GM12878 (cell line): ENCODE measurements at regions of chr3 and their contacts with region 1.

Region 1: GRCh38 chr3:58188173-58188564 is 22.6 kb downstream of the DNASE1L3 start:
- DNase-seq: no peak
- ATAC-seq: peak; percentile 35
- H3K4me3 ChIP-seq: no peak overlapping the region
- H3K27ac ChIP-seq: no peak overlapping the region
- H3K4me1 ChIP-seq: peaks cover 3% of the 10 kb centered on the region; the same call in 1 of the 2 replicates
- H3K27me3 ChIP-seq: no peaks in the 10 kb centered on the region
- CTCF ChIP-seq: no peak
- EP300 ChIP-seq: no peak
- POLR2A ChIP-seq: no peak
- RAD21 ChIP-seq: no peak

Region 2: DNA sequence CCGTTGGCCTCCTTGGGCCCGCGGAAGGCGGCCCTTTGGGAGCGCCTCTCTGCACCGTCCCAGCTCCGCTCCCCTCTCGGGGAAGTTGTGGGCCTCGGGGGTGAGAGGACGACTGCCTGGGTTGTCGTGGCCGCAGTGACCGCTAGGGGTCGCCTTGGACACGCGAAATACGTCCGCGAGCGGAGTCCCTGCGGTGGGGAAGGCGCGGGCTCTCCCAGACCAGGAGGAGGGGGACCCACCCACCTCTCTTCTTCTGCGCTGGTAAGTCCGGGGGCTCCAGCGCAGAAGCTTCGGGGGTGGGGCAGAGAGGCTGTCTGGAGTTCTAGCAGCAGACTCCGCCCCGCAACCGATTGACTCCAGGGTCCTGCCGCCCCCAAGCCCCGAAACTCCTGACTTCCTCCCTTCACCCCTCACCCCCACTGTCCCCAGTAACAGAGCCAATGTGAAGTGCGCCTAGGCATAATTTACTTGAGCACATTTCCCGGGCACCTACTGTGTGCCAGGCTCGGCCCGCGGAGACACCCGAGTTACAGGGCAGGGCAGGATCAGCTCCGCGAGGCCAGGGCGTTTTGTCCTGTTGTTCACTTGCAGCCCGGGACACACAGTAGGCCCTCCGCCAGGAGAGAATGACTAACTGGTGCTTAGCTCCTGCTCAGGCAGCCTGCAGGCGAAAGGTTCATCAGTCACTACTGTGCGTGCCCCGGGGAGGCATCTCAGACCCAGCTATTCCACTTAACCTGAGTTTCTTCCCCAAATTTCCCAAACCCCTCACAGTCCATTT is 10.2 kb before region 1 on chr3:
- CTCF ChIA-PET with region 1: interaction called, 48 read pairs
- POLR2A ChIA-PET with region 1: no interaction called
- RAD21 ChIA-PET with region 1: interaction called, 36 read pairs
- SMC1A ChIA-PET with region 1: interaction called, 18 read pairs
- in situ Hi-C with region 1: no loop called
- intact Hi-C with region 1: no loop called
- DNase-seq: no peak
- ATAC-seq: peak; percentile 94
- H3K4me3 ChIP-seq: peak overlapping the region; percentile 33; the same call in 1 of the 2 replicates
- H3K27ac ChIP-seq: no peak overlapping the region
- H3K4me1 ChIP-seq: peaks cover 14% of the 10 kb centered on the region
- H3K27me3 ChIP-seq: no peaks in the 10 kb centered on the region
- CTCF ChIP-seq: peak; percentile 81 to 93 (median 88)
- EP300 ChIP-seq: no peak
- POLR2A ChIP-seq: no peak
- RAD21 ChIP-seq: peak; percentile 68

Region 3: GRCh38 chr3:58206406-58207011 is 18.3 kb after region 1 on chr3:
- CTCF ChIA-PET with region 1: interaction called, 655 read pairs
- POLR2A ChIA-PET with region 1: interaction called, 491 read pairs
- RAD21 ChIA-PET with region 1: interaction called, 14 read pairs
- SMC1A ChIA-PET with region 1: interaction called, 60 read pairs
- in situ Hi-C with region 1: no loop called
- intact Hi-C with region 1: no loop called
- DNase-seq: no peak
- ATAC-seq: peak; percentile 58
- H3K4me3 ChIP-seq: no peak overlapping the region
- H3K27ac ChIP-seq: peak overlapping the region; percentile 6; the same call in 1 of the 2 replicates
- H3K4me1 ChIP-seq: peaks cover 23% of the 10 kb centered on the region
- H3K27me3 ChIP-seq: no peaks in the 10 kb centered on the region
- CTCF ChIP-seq: no peak
- EP300 ChIP-seq: no peak
- POLR2A ChIP-seq: no peak
- RAD21 ChIP-seq: no peak

Region 4: GRCh38 chr3:58237238-58237940 is 49.2 kb after region 1 on chr3 and contains the start of gene ABHD6:
- CTCF ChIA-PET with region 1: interaction called, 61 read pairs
- POLR2A ChIA-PET with region 1: interaction called, 8 read pairs
- RAD21 ChIA-PET with region 1: interaction called, 47 read pairs
- SMC1A ChIA-PET with region 1: interaction called, 36 read pairs
- in situ Hi-C with region 1: no loop called
- intact Hi-C with region 1: no loop called
- DNase-seq: no peak
- ATAC-seq: peak; percentile 79
- H3K4me3 ChIP-seq: peak within 1 kb of the TSS; percentile 68
- H3K27ac ChIP-seq: peak within 1 kb of the TSS; percentile 44
- H3K4me1 ChIP-seq: peaks cover 13% of the 10 kb centered on the region
- H3K27me3 ChIP-seq: no peaks in the 10 kb centered on the region
- CTCF ChIP-seq: peak; percentile 33 to 58 (median 37); a peak in 5 of 6 replicates
- EP300 ChIP-seq: no peak
- POLR2A ChIP-seq: peak; percentile 48
- RAD21 ChIP-seq: peak; percentile 61
- polyA plus RNA-seq, gene ABHD6: 1.4 to 1.5 TPM

Region 5: DNA sequence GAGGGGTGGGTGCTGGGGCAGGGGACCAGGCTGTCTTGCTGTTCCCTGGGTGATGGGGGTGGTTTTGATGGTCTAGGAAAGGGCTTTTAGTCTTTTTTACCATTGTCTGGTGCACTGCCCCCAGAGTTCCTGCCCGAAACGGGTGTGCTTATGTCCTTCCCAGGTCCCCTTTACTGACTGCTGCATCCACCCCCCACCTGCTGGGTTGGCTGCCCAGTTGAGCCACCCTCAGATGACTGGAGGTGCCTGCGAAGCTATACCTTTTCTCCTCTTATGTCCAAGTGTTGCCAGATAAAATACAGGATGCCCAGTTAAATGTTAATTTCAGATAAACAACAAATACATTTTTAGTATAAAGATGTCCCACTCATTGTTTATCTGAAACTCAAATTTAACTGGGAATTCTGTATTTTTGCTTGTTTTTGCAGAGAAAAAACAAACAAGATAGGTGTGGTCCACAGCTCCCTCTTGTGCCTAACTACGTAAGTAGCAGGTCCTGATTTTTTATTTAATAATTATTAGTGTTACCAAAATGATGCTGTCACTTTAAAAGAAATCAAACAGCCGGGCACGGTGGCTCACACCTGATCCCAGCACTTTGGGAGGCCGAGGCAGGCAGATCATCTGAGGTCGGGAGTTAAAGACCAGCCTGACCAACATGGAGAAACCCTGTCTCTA is 111.8 kb after region 1 on chr3:
- CTCF ChIA-PET with region 1: interaction called, 503 read pairs
- POLR2A ChIA-PET with region 1: interaction called, 7 read pairs
- RAD21 ChIA-PET with region 1: interaction called, 106 read pairs
- SMC1A ChIA-PET with region 1: interaction called, 127 read pairs
- in situ Hi-C with region 1: loop called (anchors 5 kb)
- intact Hi-C with region 1: loop called (anchors 1 kb)
- DNase-seq: no peak
- ATAC-seq: peak; percentile 59
- H3K4me3 ChIP-seq: no peak overlapping the region
- H3K27ac ChIP-seq: no peak overlapping the region
- H3K4me1 ChIP-seq: no peaks in the 10 kb centered on the region
- H3K27me3 ChIP-seq: no peaks in the 10 kb centered on the region; a peak in 1 of 4 replicates
- CTCF ChIP-seq: peak; percentile 48 to 59 (median 51); a peak in 5 of 6 replicates
- EP300 ChIP-seq: no peak
- POLR2A ChIP-seq: no peak
- RAD21 ChIP-seq: peak; percentile 74

Region 6: GRCh38 chr3:58532794-58533220 is 344.6 kb after region 1 on chr3:
- CTCF ChIA-PET with region 1: interaction called, 4 read pairs
- POLR2A ChIA-PET with region 1: no interaction called
- RAD21 ChIA-PET with region 1: interaction called, 3 read pairs
- SMC1A ChIA-PET with region 1: interaction called, 3 read pairs
- in situ Hi-C with region 1: loop called (anchors 5 kb)
- intact Hi-C with region 1: loop called (anchors 2 kb)
- DNase-seq: peak; percentile 11
- ATAC-seq: peak; percentile 99
- H3K4me3 ChIP-seq: no peak overlapping the region
- H3K27ac ChIP-seq: no peak overlapping the region
- H3K4me1 ChIP-seq: no peaks in the 10 kb centered on the region
- H3K27me3 ChIP-seq: no peaks in the 10 kb centered on the region; a peak in 1 of 4 replicates
- CTCF ChIP-seq: peak; percentile 94 to 96 (median 94)
- EP300 ChIP-seq: no peak
- POLR2A ChIP-seq: no peak
- RAD21 ChIP-seq: peak; percentile 96